ENCODE measurements at regions of chr4 and their contacts with region 1.

Region 1: GRCh38 chr4:148441986-148442831 is at the start of gene NR3C2:
- DNase-seq: peak; percentile 94
- ATAC-seq: peak; percentile 97
- H3K4me3 ChIP-seq: peak within 1 kb of the TSS; percentile 67 to 85 (median 70)
- H3K27ac ChIP-seq: no peak within 1 kb of the TSS
- H3K4me1 ChIP-seq: peaks cover 23% of the 10 kb centered on the region
- H3K27me3 ChIP-seq: peaks cover 0 to 44% of the 10 kb centered on the region in 2 experiments; a peak in 3 of 5 replicates
- CTCF ChIP-seq: no peak
- EP300 ChIP-seq: peak in 1 of 2 experiments; percentile 8; a peak in 1 of 4 replicates
- POLR2A ChIP-seq: peak; percentile 73 to 83
- RAD21 ChIP-seq: no peak
- total RNA-seq, gene NR3C2: 0.32 and 0.46 TPM in 2 replicates

Region 2: DNA sequence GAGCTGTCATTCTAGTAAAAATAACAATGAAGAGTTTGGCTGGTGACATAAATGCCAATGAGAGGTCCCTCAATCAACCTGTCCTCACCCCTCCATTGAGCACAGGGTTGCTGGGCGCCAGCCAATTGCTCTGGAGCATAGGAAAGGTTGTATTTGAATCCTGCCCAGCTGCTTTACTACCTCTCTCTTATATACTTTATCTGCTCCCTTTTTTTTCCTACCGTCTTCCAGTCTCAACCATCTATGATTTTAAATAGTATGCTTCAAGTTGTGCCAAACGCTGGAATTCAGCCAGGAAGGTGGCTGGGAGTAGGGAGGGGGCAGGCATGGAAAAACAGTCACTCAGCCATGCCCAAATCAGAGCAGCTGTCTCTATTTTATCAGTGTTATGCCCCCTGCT is 153.8 kb before region 1 on chr4:
- CTCF ChIA-PET with region 1: no interaction called
- POLR2A ChIA-PET with region 1: no interaction called
- in situ Hi-C with region 1: no loop called
- intact Hi-C with region 1: loop called (anchors 10 kb)
- DNase-seq: no peak
- ATAC-seq: no peak
- H3K4me3 ChIP-seq: no peak overlapping the region
- H3K27ac ChIP-seq: no peak overlapping the region
- H3K4me1 ChIP-seq: 0 out of 2 replicates have a peak, but pooled peaks cover 5% of the 10 kb centered on the region
- H3K27me3 ChIP-seq: no peaks in the 10 kb centered on the region
- CTCF ChIP-seq: no peak
- EP300 ChIP-seq: no peak
- POLR2A ChIP-seq: no peak
- RAD21 ChIP-seq: no peak

Region 3: DNA sequence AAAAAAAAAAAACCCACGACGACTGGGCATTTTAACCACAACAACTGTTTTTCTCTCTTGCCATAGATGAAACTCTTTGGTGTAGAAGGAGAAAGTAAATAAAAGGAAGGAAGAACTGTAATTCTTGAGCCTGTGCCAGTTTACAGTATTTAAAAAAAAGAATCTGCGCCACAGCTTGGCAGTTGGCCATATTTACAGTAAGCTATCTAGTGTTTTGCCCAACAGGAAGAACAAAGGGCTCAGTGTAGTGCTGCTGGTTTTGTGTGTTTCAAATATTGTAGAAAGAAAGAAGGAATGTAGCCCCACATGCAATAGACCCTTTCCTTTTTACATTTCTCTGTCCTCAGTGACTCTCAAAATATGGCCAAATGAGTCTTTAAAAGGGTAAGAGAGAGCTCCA is 66.1 kb before region 1 on chr4:
- CTCF ChIA-PET with region 1: no interaction called
- POLR2A ChIA-PET with region 1: interaction called, 5 read pairs
- in situ Hi-C with region 1: no loop called
- intact Hi-C with region 1: loop called (anchors 5 kb)
- DNase-seq: peak; percentile 94
- ATAC-seq: peak; percentile 100
- H3K4me3 ChIP-seq: peak overlapping the region in 1 of 3 experiments; percentile 23; a peak in 1 of 6 replicates
- H3K27ac ChIP-seq: peak overlapping the region; percentile 61
- H3K4me1 ChIP-seq: peaks cover 20% of the 10 kb centered on the region
- H3K27me3 ChIP-seq: no peaks in the 10 kb centered on the region
- CTCF ChIP-seq: no peak
- EP300 ChIP-seq: peak in 1 of 2 experiments; percentile 83; a peak in 2 of 4 replicates
- POLR2A ChIP-seq: no peak
- RAD21 ChIP-seq: no peak